SK-N-SH (cell line): ENCODE measurements at regions of chr5 and their contacts with region 1.

Region 1: DNA sequence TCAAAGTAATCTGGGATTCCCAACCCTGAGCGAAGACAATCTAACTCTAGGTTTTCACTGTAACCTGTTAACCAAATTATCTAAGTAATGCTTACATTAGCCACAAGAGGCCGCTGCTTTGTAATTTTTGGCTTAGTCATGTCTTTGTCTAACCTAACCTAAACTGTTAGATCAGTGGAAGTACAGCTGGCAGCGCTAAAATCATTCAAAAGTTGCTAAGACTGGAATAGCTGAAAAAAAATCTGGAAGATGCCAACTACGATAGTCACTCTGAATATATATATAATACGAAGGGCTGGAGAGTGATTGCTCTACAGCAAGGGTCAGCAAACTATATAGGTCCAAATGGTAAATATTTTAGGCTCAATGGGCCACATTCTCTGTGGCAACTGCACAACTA is 60.2 kb downstream of the FBXO38 start:
- DNase-seq: peak; percentile 52
- H3K4me3 ChIP-seq: no peak overlapping the region
- H3K27ac ChIP-seq: no peak overlapping the region
- H3K4me1 ChIP-seq: no peaks in the 10 kb centered on the region
- H3K27me3 ChIP-seq: no peaks in the 10 kb centered on the region
- CTCF ChIP-seq: peak; percentile 85
- EP300 ChIP-seq: no peak
- RAD21 ChIP-seq: peak; percentile 90

Region 2: DNA sequence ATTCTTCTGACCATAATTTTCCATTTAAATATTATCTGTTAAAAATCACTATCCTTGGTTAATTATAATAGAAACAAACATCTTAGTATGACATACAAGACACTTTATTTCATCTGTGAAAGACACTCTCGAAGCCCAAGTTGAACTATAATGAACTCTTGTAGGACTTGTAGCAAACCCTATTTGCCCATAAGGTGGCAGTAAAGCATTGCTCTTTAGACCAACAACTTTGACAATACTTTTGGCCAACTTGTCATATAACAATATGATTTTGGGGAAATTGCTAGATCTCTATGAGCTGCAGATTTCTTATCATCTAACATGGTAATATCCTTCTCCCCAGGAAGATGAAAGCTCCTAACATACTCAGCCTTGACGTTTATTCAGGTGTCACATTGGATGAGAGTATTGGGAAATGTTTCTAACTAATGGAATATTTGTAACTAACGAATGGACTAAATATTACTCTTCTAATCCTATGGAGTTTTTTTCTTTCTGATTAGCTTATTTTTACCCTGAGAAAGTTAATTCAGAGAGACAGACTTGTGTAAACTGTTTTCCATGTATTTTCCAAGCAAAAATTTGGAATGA is 264.7 kb before region 1 on chr5:
- CTCF ChIA-PET with region 1: interaction called, 14 read pairs
- POLR2A ChIA-PET with region 1: no interaction called
- DNase-seq: peak; percentile 12
- H3K4me3 ChIP-seq: no peak overlapping the region
- H3K27ac ChIP-seq: no peak overlapping the region
- H3K4me1 ChIP-seq: no peaks in the 10 kb centered on the region
- H3K27me3 ChIP-seq: no peaks in the 10 kb centered on the region
- CTCF ChIP-seq: peak; percentile 82
- EP300 ChIP-seq: no peak
- RAD21 ChIP-seq: peak; percentile 91

Region 3: DNA sequence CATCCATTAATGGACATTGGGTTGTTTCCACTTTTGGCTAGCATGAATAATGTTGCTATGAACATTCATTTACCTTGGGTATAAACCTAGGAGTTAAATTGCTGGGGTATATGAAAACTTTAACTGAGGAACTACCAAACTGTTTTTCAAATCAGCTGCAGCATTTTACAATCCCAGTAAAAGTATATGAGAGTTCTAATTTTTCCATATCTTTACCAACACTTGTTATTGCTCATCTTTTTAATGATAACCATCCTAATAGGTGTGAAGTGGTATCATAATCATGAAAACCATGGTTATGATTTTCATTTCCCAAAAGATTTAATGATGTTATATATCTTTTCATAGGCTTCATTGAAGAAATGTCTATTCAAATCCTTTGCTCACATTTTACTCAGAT is 75.7 kb before region 1 on chr5:
- CTCF ChIA-PET with region 1: no interaction called
- POLR2A ChIA-PET with region 1: no interaction called
- DNase-seq: no peak
- H3K4me3 ChIP-seq: no peak overlapping the region
- H3K27ac ChIP-seq: no peak overlapping the region
- H3K4me1 ChIP-seq: no peaks in the 10 kb centered on the region
- H3K27me3 ChIP-seq: no peaks in the 10 kb centered on the region
- CTCF ChIP-seq: no peak
- EP300 ChIP-seq: no peak
- RAD21 ChIP-seq: no peak

Region 4: DNA sequence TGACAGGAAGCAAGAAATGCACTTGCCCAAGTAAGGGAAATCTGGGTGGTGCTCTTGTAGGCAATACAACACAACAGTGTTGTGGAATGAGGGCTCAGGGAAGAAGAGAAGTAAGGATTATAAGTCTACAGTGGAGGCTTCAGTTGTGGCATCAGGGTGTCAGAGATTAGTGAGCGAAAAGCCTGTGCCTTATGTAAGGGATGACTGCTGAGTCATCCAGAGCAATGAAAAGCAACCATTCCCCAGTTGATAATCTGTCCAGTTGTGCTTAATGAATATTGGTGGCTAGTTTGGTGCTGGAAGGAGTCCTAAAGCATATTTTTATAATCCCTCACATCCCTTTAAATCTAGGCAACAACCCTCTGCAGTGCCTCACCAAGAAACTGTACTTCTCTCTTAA is 18.2 kb before region 1 on chr5:
- CTCF ChIA-PET with region 1: interaction called, 10 read pairs
- POLR2A ChIA-PET with region 1: no interaction called
- DNase-seq: no peak
- H3K4me3 ChIP-seq: no peak overlapping the region
- H3K27ac ChIP-seq: no peak overlapping the region; a peak in 1 of 4 replicates
- H3K4me1 ChIP-seq: no peaks in the 10 kb centered on the region; a peak in 1 of 4 replicates
- H3K27me3 ChIP-seq: no peaks in the 10 kb centered on the region
- CTCF ChIP-seq: no peak
- EP300 ChIP-seq: no peak
- RAD21 ChIP-seq: no peak

Region 5: DNA sequence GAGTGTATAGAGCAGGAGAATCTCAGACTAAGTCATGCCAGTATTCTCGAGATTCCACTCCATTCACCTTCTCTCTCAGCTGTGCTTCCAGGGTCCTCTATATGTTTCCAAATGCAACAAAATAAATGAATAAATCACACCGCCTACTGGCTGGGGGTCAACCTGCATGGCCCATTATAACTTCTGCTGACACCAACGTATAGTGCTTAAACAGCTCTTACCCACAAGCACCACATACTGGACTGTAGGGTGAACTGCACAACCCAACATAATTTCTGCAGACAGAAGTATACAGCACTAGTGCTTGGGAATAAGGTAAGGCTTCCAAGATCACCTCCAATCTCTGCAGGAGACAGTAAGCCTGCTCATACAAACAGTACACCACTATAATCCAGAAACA is 243.4 kb after region 1 on chr5:
- CTCF ChIA-PET with region 1: interaction called, 35 read pairs
- POLR2A ChIA-PET with region 1: no interaction called
- DNase-seq: no peak
- H3K4me3 ChIP-seq: no peak overlapping the region; a peak in 1 of 4 replicates
- H3K27ac ChIP-seq: peak overlapping the region in 1 of 2 experiments; percentile 33; a peak in 1 of 4 replicates
- H3K4me1 ChIP-seq: peaks cover 0 to 4% of the 10 kb centered on the region in 2 experiments; a peak in 2 of 4 replicates
- H3K27me3 ChIP-seq: no peaks in the 10 kb centered on the region; the same call in 1 of the 2 replicates
- CTCF ChIP-seq: peak; percentile 53
- EP300 ChIP-seq: no peak
- RAD21 ChIP-seq: peak; percentile 77

Region 6: DNA sequence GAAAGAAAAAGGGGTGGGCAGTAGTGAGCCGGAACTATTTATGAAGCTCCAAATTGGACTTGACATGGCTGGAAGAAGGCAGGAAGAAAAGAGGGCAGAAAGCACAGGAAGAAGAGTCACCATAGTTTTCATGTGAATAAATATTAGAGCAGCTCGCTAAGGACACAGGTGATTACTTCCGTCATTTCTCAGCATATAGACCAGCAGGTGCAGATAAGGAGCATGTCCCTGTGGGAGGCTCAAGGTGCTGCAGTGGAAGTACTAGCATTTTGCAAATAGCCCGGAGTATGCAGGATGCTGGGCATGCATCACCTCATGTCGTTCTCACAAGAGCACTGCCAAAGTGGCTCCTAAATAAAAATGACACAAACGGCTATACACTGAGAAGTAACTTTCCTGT is 281.7 kb after region 1 on chr5:
- CTCF ChIA-PET with region 1: interaction called, 704 read pairs
- POLR2A ChIA-PET with region 1: no interaction called
- DNase-seq: no peak
- H3K4me3 ChIP-seq: no peak overlapping the region
- H3K27ac ChIP-seq: no peak overlapping the region
- H3K4me1 ChIP-seq: peaks cover 0 to 3% of the 10 kb centered on the region in 2 experiments; a peak in 1 of 4 replicates
- H3K27me3 ChIP-seq: no peaks in the 10 kb centered on the region; the same call in 1 of the 2 replicates
- CTCF ChIP-seq: no peak
- EP300 ChIP-seq: no peak
- RAD21 ChIP-seq: no peak

Region 7: GRCh38 chr5:149381987-149382340 is 938.0 kb after region 1 on chr5:
- CTCF ChIA-PET with region 1: no interaction called
- POLR2A ChIA-PET with region 1: no interaction called
- DNase-seq: peak; percentile 93
- H3K4me3 ChIP-seq: no peak overlapping the region; a peak in 1 of 4 replicates
- H3K27ac ChIP-seq: peak overlapping the region in 1 of 2 experiments; percentile 73; a peak in 1 of 4 replicates
- H3K4me1 ChIP-seq: peaks cover 0 to 48% of the 10 kb centered on the region in 2 experiments; a peak in 1 of 4 replicates
- H3K27me3 ChIP-seq: no peaks in the 10 kb centered on the region
- CTCF ChIP-seq: peak; percentile 91
- EP300 ChIP-seq: no peak
- RAD21 ChIP-seq: peak; percentile 94